Activated CD4-positive, alpha-beta T cell treated with anti-CD3 and anti-CD28 coated beads, Interleukin-2, amount 10 ng/mL, durations not matched to agents 24 days and 14 days (primary cell): ENCODE measurements at regions of chr17 and their contacts with region 1.

Region 1: GRCh38 chr17:35119368-35120165 is at the start of gene RAD51D:
- DNase-seq: peak; percentile 94
- H3K4me3 Mint-ChIP-seq: peak within 1 kb of the TSS; percentile 94
- H3K27ac Mint-ChIP-seq: peak within 1 kb of the TSS; percentile 89
- H3K4me1 Mint-ChIP-seq: peaks cover 36% of the 10 kb centered on the region
- H3K27me3 Mint-ChIP-seq: no peaks in the 10 kb centered on the region
- total RNA-seq, gene RAD51D: 32.6 and 35.2 TPM in 2 replicates

Region 2: GRCh38 chr17:34542700-34543336 is 576.7 kb before region 1 on chr17:
- intact Hi-C with region 1: loop called (anchors 5 kb)
- DNase-seq: peak; percentile 86
- H3K4me3 Mint-ChIP-seq: no peak overlapping the region
- H3K27ac Mint-ChIP-seq: no peak overlapping the region
- H3K4me1 Mint-ChIP-seq: no peaks in the 10 kb centered on the region
- H3K27me3 Mint-ChIP-seq: peaks cover 32% of the 10 kb centered on the region

Region 3: DNA sequence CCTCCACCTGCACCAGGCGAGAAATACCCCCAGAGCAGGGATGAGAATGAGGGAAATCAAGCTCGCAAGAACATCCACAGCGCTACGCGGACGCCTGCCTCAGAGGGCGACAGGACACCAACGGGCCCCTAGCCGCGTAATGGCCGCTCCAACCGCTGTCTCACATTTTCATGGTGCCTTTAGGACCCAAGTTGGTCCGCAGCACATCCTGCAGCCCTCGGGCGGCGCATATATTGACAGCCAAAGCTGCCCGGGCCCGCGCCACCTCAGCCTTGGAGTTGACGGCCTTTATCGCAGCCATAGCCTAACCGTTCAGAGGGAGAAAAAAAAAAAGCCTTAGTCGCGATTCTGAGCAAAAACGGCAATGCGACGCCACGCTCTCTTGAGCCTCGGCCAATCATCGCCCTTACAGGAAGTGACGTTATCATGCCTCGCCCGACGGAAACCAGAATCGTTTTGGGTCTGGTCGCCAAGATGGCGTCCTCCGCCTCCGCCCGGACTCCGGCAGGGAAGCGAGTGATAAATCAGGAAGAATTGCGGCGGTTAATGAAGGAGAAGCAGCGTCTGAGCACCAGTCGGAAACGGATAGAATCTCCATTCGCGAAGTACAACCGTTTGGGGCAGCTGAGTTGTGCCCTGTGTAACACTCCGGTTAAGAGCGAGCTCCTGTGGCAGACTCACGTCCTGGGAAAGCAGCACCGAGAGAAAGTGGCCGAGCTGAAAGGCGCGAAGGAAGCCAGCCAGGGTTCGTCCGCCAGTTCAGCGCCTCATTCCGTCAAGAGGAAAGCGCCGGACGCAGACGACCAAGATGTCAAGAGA is 158.3 kb before region 1 on chr17 and contains the starts of genes CCT6B and ZNF830:
- intact Hi-C with region 1: loop called (anchors 1 kb)
- DNase-seq: peak; percentile 97
- H3K4me3 Mint-ChIP-seq: peak within 1 kb of the TSS; percentile 98
- H3K27ac Mint-ChIP-seq: peak within 1 kb of the TSS; percentile 100
- H3K4me1 Mint-ChIP-seq: peaks cover 24% of the 10 kb centered on the region
- H3K27me3 Mint-ChIP-seq: peaks cover 2% of the 10 kb centered on the region
- total RNA-seq, gene CCT6B: 0.40 and 1.3 TPM in 2 replicates
- total RNA-seq, gene ZNF830: 24.7 and 28.4 TPM in 2 replicates

Region 4: DNA sequence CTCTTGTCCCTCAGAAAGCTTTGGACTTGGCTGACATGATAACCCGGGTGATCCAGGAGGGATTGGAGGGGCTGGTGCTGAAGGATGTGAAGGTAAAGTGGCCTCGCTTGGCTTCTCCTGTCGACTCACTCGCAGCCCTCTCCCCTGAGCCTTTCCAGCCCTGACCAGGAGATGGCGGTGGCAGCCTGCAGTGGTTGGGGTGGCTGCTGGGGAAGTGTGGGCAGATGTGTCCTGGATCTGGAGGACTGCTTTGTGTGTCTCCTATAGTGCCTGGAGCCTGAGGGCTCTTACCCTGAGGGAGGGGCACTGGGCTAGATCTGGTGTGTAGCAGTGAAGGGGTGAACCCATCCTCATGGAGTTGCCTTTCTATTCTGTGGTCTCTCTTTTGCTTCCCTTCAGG is 121.4 kb before region 1 on chr17:
- intact Hi-C with region 1: loop called (anchors 1 kb)
- DNase-seq: peak; percentile 95
- H3K4me3 Mint-ChIP-seq: no peak overlapping the region
- H3K27ac Mint-ChIP-seq: peak overlapping the region; percentile 58
- H3K4me1 Mint-ChIP-seq: peaks cover 4% of the 10 kb centered on the region
- H3K27me3 Mint-ChIP-seq: no peaks in the 10 kb centered on the region

Region 5: GRCh38 chr17:35088881-35089585 is 30.5 kb before region 1 on chr17:
- intact Hi-C with region 1: loop called (anchors 1 kb)
- DNase-seq: peak; percentile 97
- H3K4me3 Mint-ChIP-seq: peak overlapping the region; percentile 95
- H3K27ac Mint-ChIP-seq: peak overlapping the region; percentile 96
- H3K4me1 Mint-ChIP-seq: peaks cover 44% of the 10 kb centered on the region
- H3K27me3 Mint-ChIP-seq: no peaks in the 10 kb centered on the region